Activated naive CD4-positive, alpha-beta T cell treated with anti-CD3 and anti-CD28 coated beads for 36 hours (primary cell): ENCODE measurements at regions of chr1 and their contacts with region 1.

Region 1: DNA sequence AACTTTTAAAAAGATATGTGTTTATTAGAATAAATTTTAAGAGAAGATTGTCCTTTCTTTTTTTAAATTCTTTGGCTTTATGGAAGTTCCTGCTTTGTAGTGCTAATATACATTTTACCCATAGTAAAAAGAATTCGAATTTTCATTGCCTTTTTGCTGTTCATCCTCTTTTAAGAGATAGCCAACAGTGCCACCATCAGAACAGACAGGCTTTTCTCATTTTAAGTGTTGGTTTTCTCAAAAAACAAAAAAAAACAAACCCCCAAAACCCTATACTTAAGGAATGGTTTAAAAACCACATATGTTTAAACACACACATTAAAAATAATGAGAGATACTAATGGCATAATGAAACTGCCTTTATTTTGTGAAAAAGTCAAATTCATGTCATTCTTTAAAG is 118.8 kb downstream of the NEK7 start:
- DNase-seq: no peak
- H3K4me3 Mint-ChIP-seq: no peak overlapping the region
- H3K27ac Mint-ChIP-seq: no peak overlapping the region
- H3K4me1 Mint-ChIP-seq: peaks cover 5% of the 10 kb centered on the region
- H3K27me3 Mint-ChIP-seq: no peaks in the 10 kb centered on the region

Region 2: GRCh38 chr1:198246337-198246736 is 29.3 kb before region 1 on chr1:
- CTCF ChIA-PET with region 1: interaction called, 3 read pairs
- intact Hi-C with region 1: loop called (anchors 1 kb)
- DNase-seq: no peak
- H3K4me3 Mint-ChIP-seq: no peak overlapping the region
- H3K27ac Mint-ChIP-seq: no peak overlapping the region
- H3K4me1 Mint-ChIP-seq: peaks cover 15% of the 10 kb centered on the region
- H3K27me3 Mint-ChIP-seq: no peaks in the 10 kb centered on the region

Region 3: GRCh38 chr1:198298640-198299039 is 23.0 kb after region 1 on chr1:
- CTCF ChIA-PET with region 1: no interaction called
- intact Hi-C with region 1: no loop called
- DNase-seq: no peak
- H3K4me3 Mint-ChIP-seq: no peak overlapping the region
- H3K27ac Mint-ChIP-seq: no peak overlapping the region
- H3K4me1 Mint-ChIP-seq: no peaks in the 10 kb centered on the region
- H3K27me3 Mint-ChIP-seq: no peaks in the 10 kb centered on the region